ENCODE measurements at regions of chr9 and their contacts with region 1.

Region 1: GRCh38 chr9:93095205-93096130 is 549 bp upstream of the CARD19 start:
- DNase-seq: peak; percentile 100
- ATAC-seq: peak; percentile 93
- H3K4me3 ChIP-seq: peak overlapping the region in 1 of 2 donors; percentile 31
- H3K27ac ChIP-seq: peak overlapping the region; percentile 28 to 69
- H3K4me1 ChIP-seq: peaks cover 2 to 8% of the 10 kb centered on the region in 2 donors
- H3K27me3 ChIP-seq: no peaks in the 10 kb centered on the region

Region 2: DNA sequence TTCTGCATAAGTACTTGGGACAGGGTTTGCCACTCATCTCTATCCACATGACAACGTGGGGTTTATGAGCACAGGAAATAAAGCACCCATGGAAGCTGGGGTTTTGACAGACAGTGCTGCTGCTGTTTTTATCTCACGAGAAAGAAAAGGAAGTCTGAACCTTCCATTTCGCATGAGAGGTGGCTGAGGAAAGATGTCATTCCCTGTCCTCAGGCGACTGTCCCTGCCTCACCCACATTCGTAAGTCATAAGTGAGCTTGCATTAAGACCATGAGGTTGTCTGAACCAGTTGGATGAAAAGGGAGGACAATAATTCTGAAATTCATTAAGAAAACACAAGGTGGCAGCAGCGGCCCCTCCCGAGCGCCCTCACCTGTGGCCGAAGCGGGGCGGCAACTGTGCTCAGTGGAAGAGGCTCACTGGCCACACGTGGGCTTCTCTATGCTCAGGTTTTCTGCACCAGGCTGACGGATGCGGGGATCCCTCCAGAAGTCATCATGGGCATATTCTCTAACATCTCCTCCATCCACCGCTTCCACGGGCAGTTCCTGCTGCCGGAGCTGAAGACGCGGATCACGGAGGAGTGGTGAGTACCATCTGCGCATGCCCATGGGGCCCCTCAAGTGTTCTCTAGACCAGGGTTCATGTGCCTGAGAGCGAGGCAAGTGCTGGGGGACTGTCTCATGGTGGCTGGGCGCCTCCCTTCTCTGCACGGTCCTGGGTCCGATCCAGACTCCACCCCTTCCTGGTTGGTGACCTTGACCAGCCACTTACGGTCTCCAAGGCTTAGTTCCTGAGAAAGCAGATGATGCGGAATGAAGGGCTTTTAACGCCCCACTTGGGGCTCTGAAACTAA is 91.7 kb before region 1 on chr9:
- intact Hi-C with region 1: loop called (anchors 10 kb)
- DNase-seq: no peak
- ATAC-seq: peak; percentile 82
- H3K4me3 ChIP-seq: no peak overlapping the region
- H3K27ac ChIP-seq: no peak overlapping the region
- H3K4me1 ChIP-seq: no peaks in the 10 kb centered on the region
- H3K27me3 ChIP-seq: no peaks in the 10 kb centered on the region

Region 3: DNA sequence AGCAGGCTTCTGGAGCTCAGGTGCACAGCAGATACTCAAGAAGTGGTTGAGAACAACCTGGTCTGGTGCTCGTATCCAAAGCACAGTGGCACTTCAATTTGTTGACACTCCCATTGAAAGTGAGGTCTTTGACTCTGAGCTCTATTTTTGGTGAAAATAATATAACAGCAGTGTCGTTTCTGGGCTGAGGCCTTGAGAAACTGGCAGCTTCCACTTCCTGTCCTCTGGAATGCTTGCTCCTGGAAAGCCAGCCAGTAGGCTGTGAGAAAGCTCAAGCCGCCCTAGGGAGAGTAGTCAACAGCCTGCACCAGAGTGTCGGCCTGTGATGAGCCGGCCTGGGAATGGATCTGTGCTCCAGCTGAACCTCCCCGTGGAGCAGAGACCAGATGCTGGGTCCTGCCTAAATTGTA is 43.8 kb before region 1 on chr9:
- intact Hi-C with region 1: loop called (anchors 2 to 5 kb)
- DNase-seq: peak in 1 of 2 donors; percentile 78
- ATAC-seq: peak; percentile 84
- H3K4me3 ChIP-seq: no peak overlapping the region
- H3K27ac ChIP-seq: peak overlapping the region; percentile 65 to 99
- H3K4me1 ChIP-seq: peaks cover 0 to 5% of the 10 kb centered on the region in 2 donors
- H3K27me3 ChIP-seq: no peaks in the 10 kb centered on the region

Region 4: DNA sequence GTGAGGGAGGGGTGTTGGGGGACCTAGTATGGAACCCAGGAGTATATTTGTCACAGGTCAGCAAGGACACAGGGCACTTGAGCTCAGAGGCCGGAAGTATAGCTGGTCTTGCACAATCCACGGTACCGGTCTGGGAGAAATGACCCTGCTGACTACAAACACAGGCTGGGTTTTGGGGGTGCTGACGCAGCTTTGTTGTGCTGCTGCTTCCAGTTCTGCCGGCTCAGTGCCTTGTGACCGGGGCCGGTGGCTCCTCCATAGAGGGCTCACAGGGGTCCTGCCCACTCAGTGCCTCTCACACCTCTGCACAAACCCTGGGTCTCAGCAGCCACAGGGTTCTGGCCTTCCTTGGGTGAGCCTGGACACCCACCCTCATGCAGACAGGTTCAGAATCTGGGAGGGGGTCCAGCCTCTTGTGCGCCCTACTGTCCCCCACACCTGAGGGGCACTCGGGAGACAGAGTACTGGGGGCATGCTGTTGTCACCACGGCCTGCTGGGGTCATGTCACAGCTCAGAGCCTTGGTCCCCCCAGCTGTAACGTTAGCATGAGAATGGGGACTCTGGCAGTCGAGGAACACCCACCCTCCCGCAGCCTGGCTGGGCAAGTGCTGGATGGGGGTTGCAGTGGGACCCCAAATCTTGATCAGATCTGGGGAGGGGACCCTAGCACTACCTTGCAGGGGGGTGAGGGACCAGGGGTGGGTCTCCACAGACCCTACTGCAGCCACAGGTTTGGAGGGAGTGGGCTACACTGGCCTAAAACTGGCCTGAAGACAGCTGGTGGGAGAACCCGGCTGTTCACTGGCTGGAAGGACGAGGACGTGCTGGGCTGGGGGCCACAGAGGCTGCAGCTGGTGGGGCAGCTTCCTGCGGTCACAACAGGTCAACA is 20.8 kb after region 1 on chr9:
- intact Hi-C with region 1: loop called in 1 of 2 experiments (anchors 1 kb)
- DNase-seq: peak; percentile 83 to 93
- ATAC-seq: peak; percentile 40
- H3K4me3 ChIP-seq: no peak overlapping the region
- H3K27ac ChIP-seq: no peak overlapping the region
- H3K4me1 ChIP-seq: no peaks in the 10 kb centered on the region
- H3K27me3 ChIP-seq: no peaks in the 10 kb centered on the region

Region 5: GRCh38 chr9:93134015-93134739 is 38.7 kb after region 1 on chr9 and contains the start of gene NINJ1:
- intact Hi-C with region 1: loop called in 1 of 2 experiments (anchors 5 kb)
- DNase-seq: peak; percentile 83 to 91
- ATAC-seq: peak; percentile 90
- H3K4me3 ChIP-seq: peak within 1 kb of the TSS; percentile 64 to 87
- H3K27ac ChIP-seq: peak within 1 kb of the TSS; percentile 88 to 97
- H3K4me1 ChIP-seq: no peaks in the 10 kb centered on the region
- H3K27me3 ChIP-seq: no peaks in the 10 kb centered on the region
- total RNA-seq, gene NINJ1: 66.8 to 80.3 TPM